ENCODE measurements at regions of chr20 and their contacts with region 1.

Region 1: DNA sequence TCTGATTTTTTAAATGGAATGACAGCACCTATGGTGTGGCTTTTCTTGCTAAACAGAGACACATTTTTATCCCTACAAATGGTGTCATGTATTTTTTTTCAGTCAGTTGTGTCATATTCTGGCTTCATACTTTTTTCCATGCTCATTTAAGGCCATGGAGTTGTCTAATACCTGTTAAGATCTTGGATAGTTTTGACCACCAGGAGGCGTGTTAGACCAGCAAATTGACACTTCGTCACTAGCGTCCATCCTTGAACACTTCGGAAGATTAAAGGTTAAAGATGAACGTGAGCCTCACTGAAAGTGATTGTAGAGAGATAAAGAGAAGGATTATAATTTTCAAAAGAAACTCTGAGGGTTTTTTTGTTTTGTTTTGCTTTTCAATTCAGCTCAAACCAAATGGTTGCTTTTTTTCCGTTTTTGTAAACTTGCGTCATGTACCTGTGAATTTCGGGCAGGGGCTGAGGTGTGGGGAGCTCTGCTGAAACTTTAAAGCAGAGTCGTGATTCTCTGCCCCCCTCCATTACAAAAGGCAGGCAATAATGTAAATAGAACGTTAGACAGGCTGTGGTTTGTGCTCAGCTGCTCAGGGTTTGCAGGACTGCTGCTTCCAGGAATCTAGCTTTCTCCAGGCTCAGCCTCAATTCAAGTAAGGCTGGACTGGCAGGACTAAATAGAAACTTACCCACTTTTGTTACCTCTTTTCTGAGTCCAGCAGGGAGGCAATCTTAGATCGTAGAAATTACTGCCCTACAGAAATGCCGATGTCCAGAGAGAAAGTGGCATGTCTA is 245.1 kb downstream of the FOXA2 start:
- DNase-seq: peak; percentile 4
- H3K4me3 ChIP-seq: no peak overlapping the region
- H3K27ac ChIP-seq: no peak overlapping the region
- H3K27me3 ChIP-seq: no peaks in the 10 kb centered on the region
- CTCF ChIP-seq: peak; percentile 77

Region 2: GRCh38 chr20:22324505-22324904 is 14.8 kb before region 1 on chr20:
- CTCF ChIA-PET with region 1: no interaction called
- POLR2A ChIA-PET with region 1: no interaction called
- DNase-seq: no peak
- H3K4me3 ChIP-seq: no peak overlapping the region
- H3K27ac ChIP-seq: no peak overlapping the region
- H3K27me3 ChIP-seq: no peaks in the 10 kb centered on the region
- CTCF ChIP-seq: no peak

Region 3: DNA sequence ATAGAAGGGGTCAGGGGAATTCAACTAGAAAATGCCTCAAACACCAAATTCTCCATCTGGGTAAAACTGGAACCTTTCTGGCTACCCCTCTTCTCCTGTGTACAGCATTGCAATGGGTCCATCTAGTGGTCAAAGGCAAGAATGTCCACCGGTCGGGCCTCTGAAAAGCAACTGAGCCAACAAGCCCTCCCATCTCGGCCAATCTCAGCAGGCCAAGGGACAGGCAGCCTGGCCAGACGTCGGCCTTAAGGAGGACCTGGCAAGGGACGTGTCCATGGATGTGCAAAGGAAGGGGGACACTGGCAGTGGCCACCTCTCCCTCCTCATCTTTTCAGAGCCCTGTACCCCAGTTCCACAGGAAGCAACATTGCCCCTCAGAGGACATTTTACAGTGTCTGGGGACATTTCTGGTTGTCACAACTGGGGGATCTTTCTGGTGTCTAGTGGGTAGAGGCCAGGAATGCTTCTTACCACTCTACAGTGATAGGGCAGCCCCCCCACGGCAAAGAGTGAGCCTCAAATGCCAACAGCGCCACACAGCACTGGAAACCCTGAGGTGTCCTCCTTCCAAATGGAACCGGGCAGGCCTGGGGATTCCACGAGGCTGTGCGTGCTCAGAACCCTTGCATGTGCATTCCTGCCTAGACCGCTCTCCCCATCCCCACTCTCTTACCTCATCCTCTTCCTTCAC is 344.9 kb after region 1 on chr20:
- CTCF ChIA-PET with region 1: interaction called, 32 read pairs
- POLR2A ChIA-PET with region 1: no interaction called
- DNase-seq: peak; percentile 26
- H3K4me3 ChIP-seq: no peak overlapping the region
- H3K27ac ChIP-seq: no peak overlapping the region
- H3K27me3 ChIP-seq: no peaks in the 10 kb centered on the region
- CTCF ChIP-seq: peak; percentile 90

Measured in AG04450 (cell line).